Panc1 (cell line): ENCODE measurements at regions of chr3 and their contacts with region 1.

Region 1: DNA sequence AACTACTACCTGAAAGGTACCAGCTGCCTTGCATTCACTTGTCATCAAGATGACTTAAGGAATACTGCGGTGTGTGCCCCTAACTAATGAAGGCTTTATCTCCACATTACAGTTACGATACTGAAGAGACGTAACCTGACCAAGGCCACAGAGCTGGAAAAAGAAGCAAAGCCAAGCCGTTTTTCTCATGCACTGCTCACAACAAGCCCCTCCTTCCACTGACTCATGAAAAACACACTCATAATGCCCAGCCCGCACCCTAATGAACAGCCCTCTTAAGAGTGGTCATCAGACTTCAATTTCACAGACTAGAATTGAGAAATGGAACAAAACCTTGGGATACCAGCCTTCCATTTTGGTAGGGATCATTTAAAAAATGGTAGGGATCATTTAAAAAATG is 11.6 kb downstream of the PSMD6 start:
- DNase-seq: no peak
- ATAC-seq: no peak
- H3K4me3 ChIP-seq: no peak overlapping the region
- H3K27ac ChIP-seq: no peak overlapping the region
- H3K4me1 ChIP-seq: no peaks in the 10 kb centered on the region
- H3K27me3 ChIP-seq: no peaks in the 10 kb centered on the region
- CTCF ChIP-seq: no peak

Region 2: DNA sequence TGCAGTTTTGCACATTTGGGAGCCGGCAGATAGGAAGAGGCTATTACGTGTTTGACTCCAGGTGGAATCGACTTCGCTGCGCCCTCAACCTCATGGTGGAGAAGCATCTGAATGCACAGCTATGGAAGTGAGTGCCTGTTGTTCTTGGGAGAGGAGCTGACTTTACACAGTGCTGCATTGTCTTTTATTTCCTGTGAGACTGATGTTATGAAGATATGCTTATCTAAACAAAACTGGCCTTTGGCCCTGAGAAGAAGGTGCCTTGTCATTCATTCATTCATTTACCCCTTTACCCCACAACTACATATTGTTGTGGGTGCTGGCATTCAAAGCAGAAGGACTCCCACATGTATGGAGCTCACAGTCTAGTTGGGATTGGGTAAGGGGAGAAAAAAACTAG is 21.0 kb before region 1 on chr3:
- CTCF ChIA-PET with region 1: no interaction called
- POLR2A ChIA-PET with region 1: interaction called, 12 read pairs
- in situ Hi-C with region 1: no loop called
- intact Hi-C with region 1: no loop called
- DNase-seq: no peak
- ATAC-seq: no peak
- H3K4me3 ChIP-seq: no peak overlapping the region
- H3K27ac ChIP-seq: no peak overlapping the region
- H3K4me1 ChIP-seq: no peaks in the 10 kb centered on the region
- H3K27me3 ChIP-seq: no peaks in the 10 kb centered on the region
- CTCF ChIP-seq: no peak

Region 3: DNA sequence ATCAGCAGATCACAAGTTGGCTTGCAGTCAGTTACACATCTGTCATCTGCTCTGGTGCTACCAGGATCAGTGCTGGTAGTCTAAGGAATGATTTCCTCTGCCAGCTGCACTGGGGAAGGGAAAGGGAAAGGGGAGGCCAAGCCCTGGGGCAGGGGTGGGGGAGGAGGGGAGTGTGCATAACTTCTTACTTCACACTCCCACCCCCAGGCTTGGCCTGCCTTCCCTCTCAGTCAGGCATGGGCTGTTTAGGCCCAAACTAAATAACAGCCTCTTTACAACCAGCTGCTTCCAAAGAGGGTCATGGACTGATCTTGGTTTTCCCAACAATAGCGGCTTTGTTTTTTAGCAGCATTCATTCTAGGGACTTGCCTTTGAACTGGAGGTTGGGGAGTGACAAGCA is 97.8 kb after region 1 on chr3:
- CTCF ChIA-PET with region 1: no interaction called
- POLR2A ChIA-PET with region 1: no interaction called
- in situ Hi-C with region 1: no loop called
- intact Hi-C with region 1: no loop called
- DNase-seq: no peak
- ATAC-seq: no peak
- H3K4me3 ChIP-seq: no peak overlapping the region
- H3K27ac ChIP-seq: no peak overlapping the region
- H3K4me1 ChIP-seq: no peaks in the 10 kb centered on the region
- H3K27me3 ChIP-seq: no peaks in the 10 kb centered on the region
- CTCF ChIP-seq: no peak